A673 (cell line): ENCODE measurements at regions of chr1 and their contacts with region 1.

Region 1: DNA sequence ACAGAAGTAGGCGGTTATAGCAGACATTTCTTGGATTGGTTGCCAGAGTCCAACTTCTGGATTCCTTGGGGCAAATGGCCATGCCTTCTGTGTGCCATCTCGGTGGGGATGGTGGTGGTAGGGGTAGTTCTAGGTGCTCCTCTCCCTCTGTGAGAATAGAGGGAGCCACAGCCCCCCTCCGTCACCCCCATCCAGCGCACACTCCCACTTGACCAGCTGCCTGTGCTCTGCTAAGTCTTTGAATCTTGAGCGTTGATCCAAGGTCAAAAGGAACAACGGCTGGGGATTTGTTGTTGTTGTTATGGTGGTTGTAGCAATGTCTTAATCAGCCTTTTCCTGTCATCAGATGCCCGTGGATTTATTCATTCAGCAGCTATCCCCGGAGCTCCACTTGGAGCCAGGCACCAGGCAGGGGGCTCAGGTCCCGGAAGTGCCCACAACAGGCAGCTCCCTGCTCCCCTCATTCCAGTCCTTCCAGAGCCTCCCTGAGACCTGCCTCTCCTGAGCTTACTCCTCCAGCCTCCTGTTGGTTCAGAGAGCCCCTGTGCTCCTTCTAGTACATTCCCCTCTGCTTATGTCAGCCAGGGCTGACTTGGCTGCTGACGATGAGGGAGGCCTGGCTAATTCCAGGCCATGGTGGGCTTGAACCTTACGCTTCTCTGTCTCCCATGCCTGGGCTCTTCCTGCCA is 146.6 kb upstream of the WNT4 start:
- DNase-seq: peak; percentile 52
- H3K4me3 ChIP-seq: no peak overlapping the region
- H3K27ac ChIP-seq: no peak overlapping the region
- H3K4me1 ChIP-seq: no peaks in the 10 kb centered on the region
- H3K27me3 ChIP-seq: no peaks in the 10 kb centered on the region
- CTCF ChIP-seq: no peak

Region 2: GRCh38 chr1:21100481-21100921 is 1189.0 kb before region 1 on chr1:
- CTCF ChIA-PET with region 1: no interaction called
- POLR2A ChIA-PET with region 1: no interaction called
- intact Hi-C with region 1: no loop called
- DNase-seq: peak; percentile 84
- H3K4me3 ChIP-seq: no peak overlapping the region
- H3K27ac ChIP-seq: peak overlapping the region; percentile 64
- H3K4me1 ChIP-seq: peaks cover 27% of the 10 kb centered on the region
- H3K27me3 ChIP-seq: no peaks in the 10 kb centered on the region
- CTCF ChIP-seq: no peak

Region 3: GRCh38 chr1:21114431-21114830 is 1175.0 kb before region 1 on chr1:
- CTCF ChIA-PET with region 1: no interaction called
- POLR2A ChIA-PET with region 1: no interaction called
- intact Hi-C with region 1: no loop called
- DNase-seq: no peak
- H3K4me3 ChIP-seq: no peak overlapping the region
- H3K27ac ChIP-seq: no peak overlapping the region
- H3K4me1 ChIP-seq: peaks cover 24% of the 10 kb centered on the region
- H3K27me3 ChIP-seq: no peaks in the 10 kb centered on the region
- CTCF ChIP-seq: no peak

Region 4: DNA sequence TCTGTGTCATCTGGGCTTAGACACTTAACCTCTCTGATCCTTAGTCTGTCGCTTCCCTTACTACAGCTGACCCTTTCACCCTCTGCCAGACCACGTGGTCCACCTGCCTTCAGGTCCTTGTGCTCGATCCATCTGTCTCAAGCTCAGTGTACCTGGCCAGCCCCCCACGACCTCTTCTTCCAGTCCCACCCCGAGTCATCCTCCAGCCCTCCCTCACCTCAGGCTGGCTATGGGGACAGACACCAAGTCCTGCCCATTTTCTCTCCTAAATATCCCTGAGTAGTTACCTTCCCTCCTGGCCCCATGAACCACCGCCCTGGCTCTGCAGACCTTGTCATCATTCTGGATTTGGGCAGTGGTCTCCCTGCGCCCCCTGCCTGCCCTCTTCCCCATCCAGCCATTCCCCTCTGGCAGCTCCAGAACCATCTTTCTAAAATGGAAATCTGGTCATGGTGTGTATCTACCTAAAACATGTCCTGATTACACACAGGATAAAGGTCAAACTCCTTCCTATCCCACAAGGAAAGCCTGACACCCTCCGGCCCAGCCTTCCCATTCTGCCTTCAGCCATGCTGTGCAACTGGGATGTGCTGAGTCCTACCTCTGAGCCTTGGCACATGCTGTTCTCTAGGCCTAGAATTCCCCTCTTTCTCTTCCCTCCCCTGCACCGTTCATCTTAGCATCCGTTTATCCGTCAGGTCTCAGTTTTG is 528.8 kb after region 1 on chr1:
- CTCF ChIA-PET with region 1: no interaction called
- POLR2A ChIA-PET with region 1: interaction called, 16 read pairs
- intact Hi-C with region 1: no loop called
- DNase-seq: no peak
- H3K4me3 ChIP-seq: no peak overlapping the region
- H3K27ac ChIP-seq: no peak overlapping the region
- H3K4me1 ChIP-seq: no peaks in the 10 kb centered on the region
- H3K27me3 ChIP-seq: no peaks in the 10 kb centered on the region
- CTCF ChIP-seq: no peak